ENCODE measurements at regions of chr1 and their contacts with region 1.

Region 1: GRCh38 chr1:115706587-115707425 is 61.7 kb downstream of the CASQ2 start:
- DNase-seq: peak; percentile 45
- H3K4me3 ChIP-seq: no peak overlapping the region; a peak in 1 of 4 replicates
- H3K27ac ChIP-seq: no peak overlapping the region
- H3K4me1 ChIP-seq: no peaks in the 10 kb centered on the region; a peak in 1 of 4 replicates
- H3K27me3 ChIP-seq: no peaks in the 10 kb centered on the region; the same call in 1 of the 2 replicates
- CTCF ChIP-seq: peak; percentile 76
- EP300 ChIP-seq: no peak
- RAD21 ChIP-seq: peak; percentile 47

Region 2: GRCh38 chr1:115426231-115426771 is 280.5 kb before region 1 on chr1:
- CTCF ChIA-PET with region 1: no interaction called
- POLR2A ChIA-PET with region 1: no interaction called
- DNase-seq: no peak
- H3K4me3 ChIP-seq: no peak overlapping the region
- H3K27ac ChIP-seq: peak overlapping the region; percentile 16 to 60; a peak in 3 of 4 replicates
- H3K4me1 ChIP-seq: peaks cover 0 to 23% of the 10 kb centered on the region in 2 experiments; a peak in 3 of 4 replicates
- H3K27me3 ChIP-seq: no peaks in the 10 kb centered on the region
- CTCF ChIP-seq: no peak
- EP300 ChIP-seq: no peak; a peak in 1 of 4 replicates
- RAD21 ChIP-seq: no peak

Region 3: DNA sequence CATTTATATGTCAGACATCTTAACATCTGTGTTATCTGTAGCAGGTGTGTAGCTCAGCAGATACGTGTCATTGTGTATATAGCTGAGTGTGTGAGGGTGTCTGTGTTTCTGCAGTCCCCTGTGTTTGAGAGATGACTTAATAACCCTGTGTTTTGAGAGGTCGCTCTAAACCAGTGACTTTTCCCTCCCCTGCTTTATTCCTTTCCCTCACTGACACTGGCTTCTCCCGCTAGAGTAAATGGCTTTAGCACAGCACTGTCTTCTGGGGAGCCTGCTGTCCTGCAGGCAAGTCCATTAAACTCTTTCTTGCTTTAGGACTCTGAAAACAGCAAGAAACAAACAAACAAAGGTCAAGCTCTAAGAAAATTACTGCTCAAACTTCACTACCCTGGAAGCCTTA is 12.0 kb before region 1 on chr1:
- CTCF ChIA-PET with region 1: interaction called, 16 read pairs
- POLR2A ChIA-PET with region 1: no interaction called
- DNase-seq: no peak
- H3K4me3 ChIP-seq: no peak overlapping the region
- H3K27ac ChIP-seq: no peak overlapping the region
- H3K4me1 ChIP-seq: no peaks in the 10 kb centered on the region
- H3K27me3 ChIP-seq: no peaks in the 10 kb centered on the region
- CTCF ChIP-seq: no peak
- EP300 ChIP-seq: no peak
- RAD21 ChIP-seq: no peak

Region 4: DNA sequence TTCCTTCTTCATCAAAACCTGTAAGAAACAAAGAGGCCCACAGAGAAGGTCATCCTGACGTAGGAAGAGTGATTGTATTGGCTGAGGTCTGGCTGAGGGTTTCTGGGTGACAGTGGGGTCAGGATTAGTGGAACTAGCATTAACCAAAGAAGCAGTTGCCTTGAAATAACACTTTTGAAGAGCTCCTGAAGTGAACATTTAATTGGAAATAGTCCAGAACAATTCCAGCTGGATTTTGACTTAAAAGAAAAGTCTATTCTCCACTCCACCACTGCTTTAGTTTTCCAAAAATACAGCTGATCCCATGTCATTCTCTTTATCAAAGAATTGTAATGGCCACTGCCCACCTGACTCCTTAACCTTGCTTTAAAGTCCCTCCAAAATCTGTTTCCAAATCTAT is 34.0 kb after region 1 on chr1:
- CTCF ChIA-PET with region 1: interaction called, 11 read pairs
- POLR2A ChIA-PET with region 1: no interaction called
- DNase-seq: no peak
- H3K4me3 ChIP-seq: no peak overlapping the region
- H3K27ac ChIP-seq: no peak overlapping the region
- H3K4me1 ChIP-seq: no peaks in the 10 kb centered on the region
- H3K27me3 ChIP-seq: no peaks in the 10 kb centered on the region
- CTCF ChIP-seq: no peak
- EP300 ChIP-seq: no peak
- RAD21 ChIP-seq: no peak

Region 5: DNA sequence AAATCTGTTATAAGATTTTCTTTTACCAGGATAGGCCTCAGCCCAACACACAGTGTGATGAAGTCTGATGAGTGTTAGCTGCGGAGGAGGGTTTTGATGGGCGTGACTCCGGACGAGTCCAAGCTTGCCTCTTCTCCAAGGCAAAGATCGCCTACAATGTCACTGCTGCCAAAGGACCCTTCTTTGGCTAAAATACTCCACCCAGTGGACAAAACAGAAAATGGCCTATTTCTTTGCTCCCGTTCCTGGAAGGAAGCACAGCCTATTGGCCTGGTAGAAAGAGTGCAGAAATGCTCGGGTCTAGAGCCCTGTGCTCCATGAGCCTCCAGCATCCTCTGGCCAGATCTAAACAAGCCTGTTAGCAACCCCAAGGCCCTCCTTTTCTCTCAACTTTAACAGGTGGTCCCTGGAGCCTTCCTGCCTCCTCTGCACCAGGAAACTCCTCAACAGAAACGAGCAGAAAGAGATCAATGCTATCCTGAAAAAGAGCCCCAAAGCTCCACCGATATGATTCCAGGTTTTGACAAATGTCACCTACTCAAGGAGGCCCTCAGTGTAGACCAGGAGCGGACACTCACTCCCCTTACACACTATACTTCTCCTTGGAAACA is 65.1 kb after region 1 on chr1:
- CTCF ChIA-PET with region 1: interaction called, 17 read pairs
- POLR2A ChIA-PET with region 1: no interaction called
- DNase-seq: peak; percentile 68
- H3K4me3 ChIP-seq: no peak overlapping the region; a peak in 1 of 4 replicates
- H3K27ac ChIP-seq: no peak overlapping the region
- H3K4me1 ChIP-seq: peaks cover 0 to 4% of the 10 kb centered on the region in 2 experiments; a peak in 1 of 4 replicates
- H3K27me3 ChIP-seq: no peaks in the 10 kb centered on the region; the same call in 1 of the 2 replicates
- CTCF ChIP-seq: peak; percentile 74
- EP300 ChIP-seq: no peak
- RAD21 ChIP-seq: peak; percentile 93

Region 6: GRCh38 chr1:115877511-115877910 is 170.7 kb after region 1 on chr1:
- CTCF ChIA-PET with region 1: no interaction called
- POLR2A ChIA-PET with region 1: no interaction called
- DNase-seq: no peak
- H3K4me3 ChIP-seq: no peak overlapping the region
- H3K27ac ChIP-seq: no peak overlapping the region
- H3K4me1 ChIP-seq: no peaks in the 10 kb centered on the region
- H3K27me3 ChIP-seq: no peaks in the 10 kb centered on the region
- CTCF ChIP-seq: no peak
- EP300 ChIP-seq: no peak
- RAD21 ChIP-seq: no peak

Region 7: DNA sequence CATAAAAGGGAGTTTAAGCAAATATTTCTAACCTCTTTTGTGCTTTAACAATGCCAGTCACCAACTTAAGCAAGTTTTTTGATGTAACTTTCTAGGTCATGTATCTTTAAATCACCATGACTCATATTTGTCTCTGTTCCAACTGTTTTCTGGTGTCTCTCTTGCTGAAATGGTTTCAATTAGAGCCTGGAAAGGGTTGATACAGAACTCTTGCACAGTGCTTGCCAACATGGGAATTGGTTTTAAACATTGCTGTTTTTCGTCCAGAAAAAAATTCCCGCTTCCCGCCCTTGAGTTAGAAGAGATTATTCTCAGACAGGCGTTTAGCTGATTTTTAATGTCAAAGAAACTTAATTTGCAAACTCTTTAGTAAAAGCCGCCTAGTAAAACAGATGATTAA is 223.1 kb after region 1 on chr1:
- CTCF ChIA-PET with region 1: no interaction called
- POLR2A ChIA-PET with region 1: no interaction called
- DNase-seq: peak; percentile 65
- H3K4me3 ChIP-seq: no peak overlapping the region
- H3K27ac ChIP-seq: peak overlapping the region; percentile 44 to 93; a peak in 3 of 4 replicates
- H3K4me1 ChIP-seq: peaks cover 10 to 19% of the 10 kb centered on the region in 2 experiments; a peak in 3 of 4 replicates
- H3K27me3 ChIP-seq: no peaks in the 10 kb centered on the region
- CTCF ChIP-seq: no peak
- EP300 ChIP-seq: peak; percentile 59 to 66; a peak in 3 of 4 replicates
- RAD21 ChIP-seq: peak; percentile 20; the same call in 1 of the 2 replicates

Region 8: GRCh38 chr1:115958866-115959265 is 252.1 kb after region 1 on chr1:
- CTCF ChIA-PET with region 1: no interaction called
- POLR2A ChIA-PET with region 1: no interaction called
- DNase-seq: no peak
- H3K4me3 ChIP-seq: no peak overlapping the region
- H3K27ac ChIP-seq: no peak overlapping the region
- H3K4me1 ChIP-seq: no peaks in the 10 kb centered on the region
- H3K27me3 ChIP-seq: no peaks in the 10 kb centered on the region
- CTCF ChIP-seq: no peak
- EP300 ChIP-seq: no peak
- RAD21 ChIP-seq: no peak